ENCODE measurements at regions of chr12 and their contacts with region 1.

Region 1: GRCh38 chr12:13472690-13473089 is 276.2 kb downstream of the EMP1 start:
- DNase-seq: peak; percentile 65
- ATAC-seq: peak; percentile 96
- H3K4me3 ChIP-seq: no peak overlapping the region
- H3K27ac ChIP-seq: peak overlapping the region; percentile 68
- H3K4me1 ChIP-seq: peaks cover 13% of the 10 kb centered on the region
- H3K27me3 ChIP-seq: no peaks in the 10 kb centered on the region
- CTCF ChIP-seq: no peak
- EP300 ChIP-seq: peak in 1 of 2 experiments; percentile 72; a peak in 1 of 4 replicates
- POLR2A ChIP-seq: no peak
- RAD21 ChIP-seq: no peak

Region 2: DNA sequence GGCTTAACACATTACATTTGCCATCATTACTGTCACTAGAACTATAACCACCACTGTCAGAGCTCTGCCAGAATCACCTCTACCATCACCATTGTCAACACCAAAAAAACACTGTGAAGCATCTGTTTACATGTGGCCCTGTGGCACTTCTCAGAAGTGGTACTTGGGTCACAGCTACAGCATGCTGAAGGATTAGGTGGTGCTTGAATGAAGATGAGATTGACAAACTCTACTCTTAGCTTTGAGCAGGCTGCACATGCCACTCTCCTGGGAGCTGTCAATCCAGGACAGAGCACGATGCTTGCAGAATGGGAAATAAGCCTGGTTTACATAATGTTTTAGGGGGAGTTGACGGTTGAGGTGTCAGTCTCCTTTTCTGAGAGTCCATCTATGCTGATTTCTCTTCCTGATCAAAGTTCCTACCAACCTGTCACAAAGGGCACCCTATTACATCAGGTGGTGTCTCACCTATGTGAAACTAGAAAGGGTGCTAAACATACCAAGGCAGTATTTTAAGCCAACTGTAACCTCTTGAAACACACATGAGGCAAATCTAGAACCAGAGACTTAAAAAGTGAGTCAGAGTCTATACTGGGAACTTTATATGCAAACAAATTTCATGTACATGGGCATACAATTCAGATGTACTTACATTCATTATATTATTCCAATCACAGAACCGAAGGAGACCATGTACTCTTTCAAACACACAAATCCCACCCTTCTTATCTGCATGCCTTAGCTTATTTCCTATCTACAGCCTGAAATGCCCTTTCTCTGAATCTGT is 17.5 kb before region 1 on chr12:
- CTCF ChIA-PET with region 1: no interaction called
- POLR2A ChIA-PET with region 1: no interaction called
- RAD21 ChIA-PET with region 1: no interaction called
- SMC1A ChIA-PET with region 1: interaction called, 3 read pairs
- in situ Hi-C with region 1: no loop called
- intact Hi-C with region 1: loop called (anchors 2 kb)
- DNase-seq: no peak
- ATAC-seq: peak; percentile 89
- H3K4me3 ChIP-seq: no peak overlapping the region
- H3K27ac ChIP-seq: no peak overlapping the region
- H3K4me1 ChIP-seq: no peaks in the 10 kb centered on the region
- H3K27me3 ChIP-seq: no peaks in the 10 kb centered on the region
- CTCF ChIP-seq: no peak
- EP300 ChIP-seq: no peak
- POLR2A ChIP-seq: no peak
- RAD21 ChIP-seq: no peak

Measured in GM12878 (cell line).